Activated B cell treated with CpG ODN at 0.5 μM for 24 hours (primary cell): ENCODE measurements at regions of chr13 and their contacts with region 1.

Region 1: GRCh38 chr13:46288570-46289259 is 77.0 kb downstream of the LRRC63 start:
- DNase-seq: no peak
- ATAC-seq: peak; percentile 40
- H3K4me3 Mint-ChIP-seq: no peak overlapping the region
- H3K27ac Mint-ChIP-seq: no peak overlapping the region
- H3K4me1 Mint-ChIP-seq: no peaks in the 10 kb centered on the region
- H3K27me3 Mint-ChIP-seq: peaks cover 3% of the 10 kb centered on the region
- CTCF ChIP-seq: no peak

Region 2: GRCh38 chr13:45623515-45624090 is 665.1 kb before region 1 on chr13:
- CTCF ChIA-PET with region 1: no interaction called
- POLR2A ChIA-PET with region 1: no interaction called
- intact Hi-C with region 1: loop called (anchors 1 kb)
- DNase-seq: no peak
- ATAC-seq: no peak
- H3K4me3 Mint-ChIP-seq: no peak overlapping the region
- H3K27ac Mint-ChIP-seq: no peak overlapping the region
- H3K4me1 Mint-ChIP-seq: no peaks in the 10 kb centered on the region
- H3K27me3 Mint-ChIP-seq: peaks cover 32% of the 10 kb centered on the region
- CTCF ChIP-seq: no peak

Region 3: DNA sequence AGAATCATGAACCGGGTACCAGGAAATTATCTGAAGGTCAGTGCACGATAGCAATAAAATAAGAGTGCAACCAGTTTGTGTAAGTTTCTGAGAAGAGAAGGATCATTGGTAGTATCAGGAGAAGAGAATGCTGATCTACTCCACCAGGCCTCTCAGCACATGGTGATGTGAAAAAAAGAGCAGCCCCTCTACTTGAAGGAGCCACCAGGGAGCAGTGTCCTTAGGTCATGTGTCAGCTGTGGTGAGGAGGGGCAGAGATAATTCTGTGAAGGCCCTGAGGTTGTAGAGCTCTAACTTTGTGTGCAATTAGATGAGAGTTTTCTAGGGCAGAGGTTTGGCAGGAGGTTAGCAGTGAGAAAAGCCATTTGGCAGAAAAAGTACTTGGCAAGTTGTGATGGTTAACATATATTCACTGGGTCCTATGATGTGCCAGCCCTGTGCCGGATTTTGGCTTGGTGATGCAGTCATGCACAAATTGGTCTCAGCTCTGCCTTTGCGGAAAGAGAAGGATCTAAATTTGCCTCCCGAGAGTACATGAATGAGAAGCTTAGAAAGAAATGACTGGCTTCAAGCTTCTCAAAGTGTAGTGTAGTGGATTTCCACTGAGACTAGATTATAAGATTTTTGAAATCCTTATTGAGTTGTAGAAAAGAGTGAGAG is 217.0 kb before region 1 on chr13:
- CTCF ChIA-PET with region 1: no interaction called
- POLR2A ChIA-PET with region 1: no interaction called
- intact Hi-C with region 1: loop called (anchors 1 kb)
- DNase-seq: no peak
- ATAC-seq: peak; percentile 34
- H3K4me3 Mint-ChIP-seq: no peak overlapping the region
- H3K27ac Mint-ChIP-seq: no peak overlapping the region
- H3K4me1 Mint-ChIP-seq: peaks cover 6% of the 10 kb centered on the region
- H3K27me3 Mint-ChIP-seq: peaks cover 3% of the 10 kb centered on the region
- CTCF ChIP-seq: no peak

Region 4: GRCh38 chr13:46160471-46161066 is 128.1 kb before region 1 on chr13:
- CTCF ChIA-PET with region 1: interaction called, 23 read pairs
- POLR2A ChIA-PET with region 1: no interaction called
- intact Hi-C with region 1: loop called (anchors 1 kb)
- DNase-seq: no peak
- ATAC-seq: peak; percentile 45
- H3K4me3 Mint-ChIP-seq: peak overlapping the region; percentile 70
- H3K27ac Mint-ChIP-seq: peak overlapping the region; percentile 88
- H3K4me1 Mint-ChIP-seq: peaks cover 61% of the 10 kb centered on the region
- H3K27me3 Mint-ChIP-seq: no peaks in the 10 kb centered on the region
- CTCF ChIP-seq: no peak